CD4-positive, alpha-beta T cell (primary cell): ENCODE measurements at regions of chr1 and their contacts with region 1.

Region 1: DNA sequence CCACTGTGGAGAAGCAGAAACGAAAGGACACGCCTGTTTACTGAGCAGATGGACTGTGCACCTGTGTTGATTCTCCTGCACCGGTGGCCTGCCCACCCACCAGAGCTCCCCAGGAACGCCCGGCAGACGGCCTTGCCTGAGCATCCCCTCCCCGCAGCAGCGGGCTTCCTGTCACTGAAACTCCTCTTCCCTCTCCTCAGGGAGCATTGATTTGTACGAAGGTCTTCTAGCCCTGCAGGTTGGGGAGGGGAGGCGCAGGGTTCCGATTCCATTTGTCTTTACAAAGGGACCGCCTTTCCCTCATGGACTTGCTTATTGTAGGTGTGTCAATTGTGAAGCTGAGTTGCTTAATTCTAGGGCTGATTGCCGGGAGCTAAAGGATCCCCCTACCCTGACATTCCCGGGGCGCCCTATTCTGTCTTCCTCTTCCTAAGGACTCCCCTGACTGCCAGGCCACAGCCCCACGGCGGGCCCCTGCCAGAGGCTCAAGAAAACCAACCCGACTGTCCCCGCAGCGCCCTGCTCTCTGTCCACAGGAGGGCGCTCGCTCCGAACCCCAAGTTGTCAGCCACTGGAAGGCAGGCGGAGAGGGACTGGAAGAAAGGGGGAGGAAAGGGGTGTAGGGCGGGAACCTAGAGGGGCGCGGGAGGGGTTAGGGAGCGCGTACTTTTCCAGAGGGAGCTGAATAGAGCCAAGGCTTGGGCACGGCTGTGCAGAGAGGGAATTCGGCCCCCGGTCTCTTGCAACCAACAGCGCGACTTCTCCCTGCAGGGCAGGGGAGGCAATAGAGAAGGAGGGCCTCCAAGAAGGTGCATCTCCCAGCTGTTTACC is 2.8 kb downstream of the S100A6 start:
- DNase-seq: peak; percentile 61 to 89 (median 77)
- ATAC-seq: peak; percentile 32
- H3K4me3 ChIP-seq: peak overlapping the region; percentile 79
- H3K4me3 Mint-ChIP-seq: peak overlapping the region; percentile 97
- H3K27ac ChIP-seq: peak overlapping the region; percentile 87 to 95
- H3K27ac Mint-ChIP-seq: peak overlapping the region; percentile 99
- H3K4me1 ChIP-seq: peaks cover 59% of the 10 kb centered on the region
- H3K4me1 Mint-ChIP-seq: peaks cover 65% of the 10 kb centered on the region
- H3K27me3 ChIP-seq: no peaks in the 10 kb centered on the region
- H3K27me3 Mint-ChIP-seq: no peaks in the 10 kb centered on the region
- CTCF ChIP-seq: peak; percentile 88

Region 2: DNA sequence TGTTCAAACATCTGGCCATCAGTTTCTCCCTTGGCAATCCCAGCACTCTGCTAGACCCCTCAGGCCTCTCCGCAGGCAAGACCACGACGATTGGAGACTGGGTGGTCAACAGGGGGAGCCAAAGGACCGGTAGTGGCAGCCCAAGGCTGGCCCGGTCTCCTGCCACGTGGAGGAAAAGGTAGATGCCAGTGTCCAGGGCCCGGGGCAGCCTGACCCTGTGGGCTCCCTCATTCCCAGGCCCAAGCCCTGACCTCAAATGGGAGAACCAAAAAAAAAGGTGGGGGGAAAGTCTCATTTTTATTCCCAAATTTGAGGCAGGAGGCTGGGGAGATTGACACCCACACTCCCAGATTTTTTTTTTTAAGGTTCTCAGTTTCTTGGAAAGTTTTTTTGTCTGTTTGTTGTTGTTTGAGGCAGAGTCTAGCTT is 22.0 kb before region 1 on chr1:
- CTCF ChIA-PET with region 1: interaction called, 12 read pairs
- POLR2A ChIA-PET with region 1: interaction called, 4 read pairs
- intact Hi-C with region 1: loop called in 1 of 2 experiments (anchors 1 kb)
- DNase-seq: peak; percentile 64 to 91 (median 75)
- ATAC-seq: peak; percentile 79
- H3K4me3 ChIP-seq: no peak overlapping the region
- H3K4me3 Mint-ChIP-seq: no peak overlapping the region
- H3K27ac ChIP-seq: no peak overlapping the region
- H3K27ac Mint-ChIP-seq: no peak overlapping the region
- H3K4me1 ChIP-seq: peaks cover 17% of the 10 kb centered on the region
- H3K4me1 Mint-ChIP-seq: peaks cover 8% of the 10 kb centered on the region
- H3K27me3 ChIP-seq: no peaks in the 10 kb centered on the region
- H3K27me3 Mint-ChIP-seq: no peaks in the 10 kb centered on the region
- CTCF ChIP-seq: peak; percentile 98

Region 3: GRCh38 chr1:153545067-153546055 is 12.4 kb after region 1 on chr1 and contains the start of gene S100A4:
- CTCF ChIA-PET with region 1: interaction called, 55 read pairs
- POLR2A ChIA-PET with region 1: interaction called, 246 read pairs
- intact Hi-C with region 1: loop called (anchors 1 kb)
- DNase-seq: peak; percentile 65 to 95 (median 88)
- ATAC-seq: peak; percentile 81
- H3K4me3 ChIP-seq: peak within 1 kb of the TSS; percentile 82
- H3K4me3 Mint-ChIP-seq: peak within 1 kb of the TSS; percentile 88
- H3K27ac ChIP-seq: peak within 1 kb of the TSS; percentile 83 to 85
- H3K27ac Mint-ChIP-seq: peak within 1 kb of the TSS; percentile 98
- H3K4me1 ChIP-seq: peaks cover 83% of the 10 kb centered on the region
- H3K4me1 Mint-ChIP-seq: peaks cover 72% of the 10 kb centered on the region
- H3K27me3 ChIP-seq: no peaks in the 10 kb centered on the region
- H3K27me3 Mint-ChIP-seq: no peaks in the 10 kb centered on the region
- CTCF ChIP-seq: no peak
- total RNA-seq, gene S100A4: 297 to 299 TPM

Region 4: GRCh38 chr1:153553830-153554541 is 21.0 kb after region 1 on chr1:
- CTCF ChIA-PET with region 1: interaction called, 5 read pairs
- POLR2A ChIA-PET with region 1: interaction called, 12 read pairs
- intact Hi-C with region 1: no loop called
- DNase-seq: peak in 1 of 14 experiments; percentile 46
- ATAC-seq: no peak
- H3K4me3 ChIP-seq: no peak overlapping the region
- H3K4me3 Mint-ChIP-seq: no peak overlapping the region
- H3K27ac ChIP-seq: no peak overlapping the region
- H3K27ac Mint-ChIP-seq: no peak overlapping the region
- H3K4me1 ChIP-seq: peaks cover 11% of the 10 kb centered on the region
- H3K4me1 Mint-ChIP-seq: peaks cover under 1% of the 10 kb centered on the region
- H3K27me3 ChIP-seq: no peaks in the 10 kb centered on the region
- H3K27me3 Mint-ChIP-seq: no peaks in the 10 kb centered on the region
- CTCF ChIP-seq: no peak

Region 5: GRCh38 chr1:153566440-153567379 is 33.7 kb after region 1 on chr1:
- CTCF ChIA-PET with region 1: interaction called, 69 read pairs
- POLR2A ChIA-PET with region 1: interaction called, 34 read pairs
- intact Hi-C with region 1: loop called (anchors 1 kb)
- DNase-seq: peak; percentile 33 to 93 (median 83)
- ATAC-seq: peak; percentile 85
- H3K4me3 ChIP-seq: no peak overlapping the region
- H3K4me3 Mint-ChIP-seq: no peak overlapping the region
- H3K27ac ChIP-seq: peak overlapping the region; percentile 35 to 64
- H3K27ac Mint-ChIP-seq: peak overlapping the region; percentile 89
- H3K4me1 ChIP-seq: peaks cover 39% of the 10 kb centered on the region
- H3K4me1 Mint-ChIP-seq: peaks cover 32% of the 10 kb centered on the region
- H3K27me3 ChIP-seq: no peaks in the 10 kb centered on the region
- H3K27me3 Mint-ChIP-seq: no peaks in the 10 kb centered on the region
- CTCF ChIP-seq: no peak

Region 6: DNA sequence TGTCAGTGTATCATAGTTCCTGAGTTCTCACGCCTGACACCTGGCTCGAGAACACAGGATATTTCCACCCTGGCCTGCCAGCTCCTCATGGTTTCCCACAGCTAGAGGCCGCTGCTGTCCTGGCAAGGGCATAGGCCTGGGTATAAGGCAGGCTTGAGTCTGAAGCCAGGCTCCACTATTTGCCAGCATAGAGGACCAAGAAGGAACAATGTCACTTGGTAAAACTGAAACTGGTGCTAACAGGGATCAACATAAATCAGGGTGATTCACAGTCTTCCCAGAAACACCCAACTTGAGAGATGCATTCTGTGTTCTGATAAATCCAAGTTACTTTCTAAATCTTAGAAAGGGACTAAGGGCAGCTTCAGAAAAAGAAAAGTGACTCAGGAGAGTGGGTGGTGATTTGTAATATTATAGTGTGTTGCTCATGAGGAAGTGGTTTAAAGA is 39.6 kb after region 1 on chr1:
- CTCF ChIA-PET with region 1: interaction called, 69 read pairs
- POLR2A ChIA-PET with region 1: interaction called, 26 read pairs
- intact Hi-C with region 1: loop called in 1 of 2 experiments (anchors 1 kb)
- DNase-seq: peak in 12 of 14 experiments; percentile 23 to 70 (median 46)
- ATAC-seq: peak; percentile 72
- H3K4me3 ChIP-seq: no peak overlapping the region
- H3K4me3 Mint-ChIP-seq: no peak overlapping the region
- H3K27ac ChIP-seq: no peak overlapping the region
- H3K27ac Mint-ChIP-seq: no peak overlapping the region
- H3K4me1 ChIP-seq: peaks cover 17% of the 10 kb centered on the region
- H3K4me1 Mint-ChIP-seq: peaks cover 20% of the 10 kb centered on the region
- H3K27me3 ChIP-seq: peaks cover 0 to 2% of the 10 kb centered on the region in 2 experiments
- H3K27me3 Mint-ChIP-seq: peaks cover 9% of the 10 kb centered on the region
- CTCF ChIP-seq: no peak

Region 7: DNA sequence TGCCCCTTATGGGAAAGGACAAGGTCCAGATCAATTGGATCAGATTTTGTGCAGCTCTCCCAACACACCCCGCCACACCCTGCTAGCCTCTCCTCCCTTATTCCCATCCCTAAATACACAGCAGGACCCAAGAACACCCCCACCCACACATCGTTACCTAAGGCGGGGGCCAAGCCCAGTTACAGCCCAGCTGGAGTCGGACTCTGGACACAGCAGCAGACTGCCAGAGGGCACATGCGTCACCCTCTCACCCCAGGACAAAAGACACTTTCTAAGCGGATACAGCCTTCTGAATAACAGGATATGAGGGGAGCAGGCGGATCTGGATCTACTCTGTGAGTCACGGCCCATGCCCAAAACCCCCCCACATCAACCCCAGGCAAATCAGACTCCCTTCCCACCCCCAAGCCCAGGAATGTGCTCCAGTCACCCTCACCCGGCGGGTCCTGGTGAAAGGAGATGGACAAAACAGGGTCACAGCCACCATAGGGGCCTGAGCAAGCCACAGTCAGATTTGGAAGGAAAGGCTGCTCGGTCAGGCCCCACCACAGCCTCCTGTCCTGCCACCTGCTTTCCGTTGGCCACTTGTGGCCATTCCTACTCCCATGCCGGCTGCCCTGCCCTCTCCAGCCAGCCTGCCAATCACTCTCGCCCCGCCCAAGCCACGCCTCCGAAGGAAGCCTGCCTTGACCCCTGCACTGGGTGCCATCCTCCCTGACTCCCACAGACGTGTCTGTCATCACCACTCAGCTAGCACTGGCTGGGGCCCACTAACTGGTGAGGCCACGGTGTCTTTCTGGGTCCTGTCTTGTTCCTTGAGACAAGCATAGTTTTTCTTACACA is 76.0 kb after region 1 on chr1:
- CTCF ChIA-PET with region 1: no interaction called
- POLR2A ChIA-PET with region 1: no interaction called
- intact Hi-C with region 1: no loop called
- DNase-seq: no peak
- ATAC-seq: no peak
- H3K4me3 ChIP-seq: no peak overlapping the region
- H3K4me3 Mint-ChIP-seq: no peak overlapping the region
- H3K27ac ChIP-seq: no peak overlapping the region
- H3K27ac Mint-ChIP-seq: no peak overlapping the region
- H3K4me1 ChIP-seq: no peaks in the 10 kb centered on the region
- H3K4me1 Mint-ChIP-seq: no peaks in the 10 kb centered on the region
- H3K27me3 ChIP-seq: no peaks in the 10 kb centered on the region
- H3K27me3 Mint-ChIP-seq: no peaks in the 10 kb centered on the region
- CTCF ChIP-seq: no peak

Region 8: GRCh38 chr1:153670859-153671627 is 138.1 kb after region 1 on chr1 and contains the start of gene ILF2:
- CTCF ChIA-PET with region 1: no interaction called
- POLR2A ChIA-PET with region 1: interaction called, 3 read pairs
- intact Hi-C with region 1: loop called (anchors 5 kb)
- DNase-seq: peak; percentile 94 to 100 (median 97)
- ATAC-seq: peak; percentile 87
- H3K4me3 ChIP-seq: peak within 1 kb of the TSS; percentile 84
- H3K4me3 Mint-ChIP-seq: no peak within 1 kb of the TSS
- H3K27ac ChIP-seq: peak within 1 kb of the TSS; percentile 89 to 91
- H3K27ac Mint-ChIP-seq: no peak within 1 kb of the TSS
- H3K4me1 ChIP-seq: peaks cover 36% of the 10 kb centered on the region
- H3K4me1 Mint-ChIP-seq: peaks cover 25% of the 10 kb centered on the region
- H3K27me3 ChIP-seq: no peaks in the 10 kb centered on the region
- H3K27me3 Mint-ChIP-seq: no peaks in the 10 kb centered on the region
- CTCF ChIP-seq: peak; percentile 28
- total RNA-seq, gene ILF2: 140 to 147 TPM

Region 9: DNA sequence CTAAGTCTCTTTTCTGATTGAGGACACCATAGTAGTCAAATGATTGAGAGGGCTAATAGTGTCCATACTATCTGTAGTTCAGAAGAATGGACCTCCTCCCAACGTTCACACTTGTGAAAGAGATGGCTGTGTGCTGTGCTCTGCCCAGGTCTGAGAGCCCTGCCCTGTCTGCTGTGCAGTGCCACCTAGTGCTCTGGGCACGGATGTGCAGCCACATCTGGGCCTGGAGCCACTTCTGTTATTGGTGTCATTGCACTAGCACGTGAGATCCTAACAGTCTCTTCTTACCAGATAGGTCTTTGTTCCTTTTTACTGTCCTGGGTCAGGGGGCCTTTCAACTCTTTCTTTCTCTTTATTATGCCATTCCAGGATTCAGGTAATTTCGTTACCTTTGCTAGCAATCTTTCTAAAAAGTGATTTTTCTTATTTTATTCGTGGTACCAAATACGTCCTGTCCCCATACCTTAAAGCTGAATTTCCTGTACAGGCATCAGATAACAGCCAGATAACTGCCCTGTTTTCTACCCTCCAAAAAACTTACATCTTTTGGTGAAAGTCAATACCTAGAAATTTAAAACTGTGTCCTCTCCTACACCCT is 216.5 kb after region 1 on chr1:
- CTCF ChIA-PET with region 1: no interaction called
- POLR2A ChIA-PET with region 1: no interaction called
- intact Hi-C with region 1: no loop called
- DNase-seq: peak; percentile 67 to 87 (median 75)
- ATAC-seq: peak; percentile 100
- H3K4me3 ChIP-seq: no peak overlapping the region
- H3K4me3 Mint-ChIP-seq: no peak overlapping the region
- H3K27ac ChIP-seq: no peak overlapping the region
- H3K27ac Mint-ChIP-seq: peak overlapping the region; percentile 3
- H3K4me1 ChIP-seq: no peaks in the 10 kb centered on the region
- H3K4me1 Mint-ChIP-seq: peaks cover 6% of the 10 kb centered on the region
- H3K27me3 ChIP-seq: no peaks in the 10 kb centered on the region
- H3K27me3 Mint-ChIP-seq: no peaks in the 10 kb centered on the region
- CTCF ChIP-seq: peak; percentile 95